OCI-LY7 (cell line): ENCODE measurements at regions of chr6 and their contacts with region 1.

Region 1: DNA sequence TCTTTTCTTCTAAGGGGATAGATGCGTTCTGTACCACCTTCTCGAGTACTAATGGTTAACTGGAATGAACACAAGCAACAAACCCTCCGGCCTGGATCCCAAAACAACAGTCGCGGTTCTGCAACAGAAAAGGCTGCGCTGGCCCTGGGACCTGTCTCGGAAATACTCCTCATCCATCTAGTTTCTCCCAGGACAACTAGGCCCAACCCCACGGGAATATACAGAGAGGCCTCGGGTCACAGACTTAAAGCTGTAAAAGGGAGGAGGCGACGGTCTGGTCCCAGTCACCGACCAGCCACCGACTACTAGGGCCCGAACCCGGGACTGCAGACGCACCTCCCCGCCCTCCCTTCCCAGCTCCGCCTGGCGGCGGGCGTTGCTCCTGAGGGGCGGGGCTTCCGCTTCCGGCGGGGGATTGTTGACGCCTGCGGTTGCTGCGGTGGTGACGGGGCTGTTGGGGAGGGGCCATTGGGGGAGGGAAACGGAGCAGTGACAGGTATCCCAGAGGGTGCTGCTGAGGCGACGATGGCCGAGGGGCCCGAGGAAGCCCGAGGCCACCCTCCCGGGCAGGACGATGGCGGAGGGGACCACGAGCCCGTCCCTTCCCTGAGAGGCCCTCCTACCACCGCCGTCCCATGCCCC is at the start of gene FAM8A1:
- DNase-seq: peak; percentile 95
- H3K4me3 ChIP-seq: peak within 1 kb of the TSS; percentile 81
- H3K27ac ChIP-seq: peak within 1 kb of the TSS; percentile 65
- H3K4me1 ChIP-seq: peaks cover 24% of the 10 kb centered on the region
- CTCF ChIP-seq: 0 out of 2 replicates have a peak, but pooled peaks have one; percentile 34
- total RNA-seq, gene FAM8A1: 6.5 and 7.1 TPM in 2 replicates

Region 2: DNA sequence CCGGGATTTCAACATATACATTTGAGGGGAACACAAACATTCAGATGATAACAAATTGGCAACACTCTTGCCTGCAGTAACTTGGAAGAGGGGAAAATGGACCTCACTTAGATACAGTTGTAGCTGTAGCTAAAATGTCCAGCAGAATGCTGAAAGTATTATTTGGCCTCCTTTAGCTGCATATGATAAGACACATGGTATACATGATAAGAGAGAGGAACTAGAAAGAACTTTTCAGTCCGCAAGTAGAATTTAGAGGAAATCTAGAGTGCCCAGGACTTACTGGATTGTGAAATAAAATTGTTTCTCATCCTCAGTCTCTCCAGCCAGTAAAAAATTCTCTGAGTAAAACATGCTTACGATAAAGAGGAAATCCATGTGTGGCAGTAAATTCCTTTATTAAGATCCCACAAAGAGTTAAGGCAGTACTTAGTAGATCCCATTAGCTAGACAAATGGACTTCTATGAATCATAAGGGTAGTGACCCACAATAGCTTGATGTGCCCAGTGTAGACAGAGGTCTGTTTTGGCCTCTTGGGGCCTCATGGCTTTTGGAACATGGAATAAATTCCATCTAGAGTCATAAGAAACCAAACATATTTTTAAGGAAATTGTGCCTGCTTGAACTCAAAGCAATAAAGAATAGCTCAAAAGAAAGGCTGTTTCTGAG is 406.8 kb before region 1 on chr6:
- CTCF ChIA-PET with region 1: no interaction called
- POLR2A ChIA-PET with region 1: no interaction called
- intact Hi-C with region 1: no loop called
- DNase-seq: no peak
- H3K4me3 ChIP-seq: no peak overlapping the region
- H3K27ac ChIP-seq: no peak overlapping the region
- H3K4me1 ChIP-seq: no peaks in the 10 kb centered on the region
- CTCF ChIP-seq: no peak

Region 3: GRCh38 chr6:17610835-17611234 is 10.8 kb after region 1 on chr6:
- CTCF ChIA-PET with region 1: no interaction called
- POLR2A ChIA-PET with region 1: interaction called, 28 read pairs
- intact Hi-C with region 1: no loop called
- DNase-seq: no peak
- H3K4me3 ChIP-seq: no peak overlapping the region
- H3K27ac ChIP-seq: no peak overlapping the region
- H3K4me1 ChIP-seq: no peaks in the 10 kb centered on the region
- CTCF ChIP-seq: no peak

Region 4: GRCh38 chr6:17706580-17707370 is 106.8 kb after region 1 on chr6 and contains the start of gene NUP153:
- CTCF ChIA-PET with region 1: no interaction called
- POLR2A ChIA-PET with region 1: interaction called, 16 read pairs
- intact Hi-C with region 1: loop called (anchors 1 kb)
- DNase-seq: peak; percentile 98
- H3K4me3 ChIP-seq: peak within 1 kb of the TSS; percentile 100
- H3K27ac ChIP-seq: peak within 1 kb of the TSS; percentile 95
- H3K4me1 ChIP-seq: peaks cover 28% of the 10 kb centered on the region
- CTCF ChIP-seq: no peak
- total RNA-seq, gene NUP153: 66.3 and 72.5 TPM in 2 replicates